Calu3 (cell line): ENCODE measurements at regions of chr17 and their contacts with region 1.

Region 1: GRCh38 chr17:979538-980405 is at the start of gene NXN:
- DNase-seq: peak; percentile 82
- H3K4me3 Mint-ChIP-seq: peak within 1 kb of the TSS; percentile 73
- H3K27ac Mint-ChIP-seq: no peak within 1 kb of the TSS
- H3K4me1 Mint-ChIP-seq: no peaks in the 10 kb centered on the region
- H3K27me3 Mint-ChIP-seq: peaks cover 11% of the 10 kb centered on the region
- CTCF ChIP-seq: no peak
- total RNA-seq, gene NXN: 1.8 and 2.3 TPM in 2 replicates

Region 2: DNA sequence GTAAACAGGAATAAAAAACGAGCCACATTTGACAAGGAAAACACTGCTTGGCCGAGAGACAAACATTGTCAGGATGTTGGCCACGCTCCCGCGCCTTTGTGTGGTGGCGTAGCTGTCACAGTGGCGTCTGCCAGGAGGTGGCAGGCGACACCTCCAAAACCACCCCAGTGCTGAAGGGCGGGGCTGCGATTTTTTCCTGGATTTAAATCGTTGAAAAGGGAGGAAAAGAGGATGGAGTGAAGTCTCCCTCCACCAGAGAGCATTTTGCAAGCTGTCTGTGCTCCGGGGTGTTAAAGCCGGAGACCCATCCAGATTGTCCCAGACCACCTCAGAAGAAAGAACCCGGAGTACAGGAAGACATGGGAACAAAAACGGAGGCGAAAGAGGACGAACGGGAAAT is 184.9 kb before region 1 on chr17:
- CTCF ChIA-PET with region 1: interaction called, 7 read pairs
- intact Hi-C with region 1: loop called (anchors 1 kb)
- DNase-seq: peak; percentile 64
- H3K4me3 Mint-ChIP-seq: no peak overlapping the region
- H3K27ac Mint-ChIP-seq: no peak overlapping the region
- H3K4me1 Mint-ChIP-seq: no peaks in the 10 kb centered on the region
- H3K27me3 Mint-ChIP-seq: no peaks in the 10 kb centered on the region
- CTCF ChIP-seq: peak; percentile 38

Region 3: DNA sequence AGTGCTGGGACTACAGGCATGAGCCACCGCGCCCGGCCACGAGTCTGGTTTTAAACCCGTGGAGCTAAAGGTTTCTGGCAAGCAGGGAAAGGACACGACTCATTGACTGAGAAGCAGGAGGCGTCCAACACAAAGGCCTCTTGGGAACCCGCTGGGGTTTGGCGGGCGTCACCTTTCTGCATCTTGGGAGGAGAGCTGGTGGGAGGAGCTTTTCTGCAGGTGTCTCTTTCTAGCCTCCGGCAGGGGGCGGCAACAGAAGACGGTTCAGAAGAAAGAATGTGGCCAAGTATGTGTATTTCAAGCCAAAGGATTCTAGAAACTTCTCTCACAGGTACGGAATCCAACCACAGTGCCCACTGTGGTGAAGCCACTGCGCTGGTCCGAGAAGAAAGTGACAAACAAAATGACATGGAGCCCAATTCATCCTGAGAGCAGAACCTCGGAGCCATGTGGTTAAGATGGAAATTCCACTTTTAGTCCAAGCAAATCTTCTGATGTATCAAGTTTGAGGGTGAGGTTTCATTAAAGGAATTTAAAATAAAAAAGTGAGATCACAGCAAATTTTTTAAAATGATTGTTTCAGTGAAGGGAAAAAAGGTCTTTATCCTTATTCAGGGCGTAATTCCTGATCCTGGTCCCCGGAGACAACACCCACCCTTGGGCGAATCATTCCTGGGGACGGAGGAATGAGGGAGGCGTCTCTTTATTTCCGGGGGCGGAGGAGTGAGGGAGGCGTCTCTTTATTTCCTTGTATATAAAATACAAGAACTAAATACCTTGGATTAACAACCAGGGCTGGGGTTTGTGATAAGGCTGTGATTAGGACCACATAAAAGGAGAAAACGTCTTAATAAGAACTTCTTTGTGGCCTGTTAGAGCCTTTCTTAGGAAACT is 100.0 kb before region 1 on chr17:
- CTCF ChIA-PET with region 1: interaction called, 12 read pairs
- intact Hi-C with region 1: loop called (anchors 10 kb)
- DNase-seq: peak; percentile 68
- H3K4me3 Mint-ChIP-seq: no peak overlapping the region
- H3K27ac Mint-ChIP-seq: no peak overlapping the region
- H3K4me1 Mint-ChIP-seq: no peaks in the 10 kb centered on the region
- H3K27me3 Mint-ChIP-seq: no peaks in the 10 kb centered on the region
- CTCF ChIP-seq: peak; percentile 44